Naive thymus-derived CD4-positive, alpha-beta T cell (primary cell): ENCODE measurements at regions of chr2 and their contacts with region 1.

Region 1: GRCh38 chr2:213238753-213239495 is 45.3 kb upstream of the SPAG16 start:
- DNase-seq: no peak
- ATAC-seq: no peak
- H3K4me3 ChIP-seq: no peak overlapping the region
- H3K4me3 Mint-ChIP-seq: peak overlapping the region in 5 of 10 donors; percentile 10 to 42 (median 21)
- H3K27ac ChIP-seq: no peak overlapping the region
- H3K27ac Mint-ChIP-seq: peak overlapping the region in 5 of 9 donors; percentile 13 to 64 (median 34)
- H3K4me1 ChIP-seq: no peaks in the 10 kb centered on the region
- H3K4me1 Mint-ChIP-seq: peaks cover 0 to 28% (median 7%) of the 10 kb centered on the region in 7 donors
- H3K27me3 ChIP-seq: no peaks in the 10 kb centered on the region
- H3K27me3 Mint-ChIP-seq: peaks cover 21 to 41% (median 31%) of the 10 kb centered on the region in 5 donors

Region 2: GRCh38 chr2:212863185-212863588 is 375.7 kb before region 1 on chr2:
- CTCF ChIA-PET with region 1: no interaction called
- POLR2A ChIA-PET with region 1: no interaction called
- intact Hi-C with region 1: loop called in 1 of 2 experiments (anchors 5 kb)
- DNase-seq: peak in 1 of 9 donors; percentile 14
- ATAC-seq: no peak
- H3K4me3 ChIP-seq: no peak overlapping the region
- H3K4me3 Mint-ChIP-seq: no peak overlapping the region
- H3K27ac ChIP-seq: no peak overlapping the region
- H3K27ac Mint-ChIP-seq: peak overlapping the region in 1 of 9 donors; percentile 5
- H3K4me1 ChIP-seq: no peaks in the 10 kb centered on the region
- H3K4me1 Mint-ChIP-seq: no peaks in the 10 kb centered on the region
- H3K27me3 ChIP-seq: no peaks in the 10 kb centered on the region
- H3K27me3 Mint-ChIP-seq: peaks cover 0 to 7% (median 0%) of the 10 kb centered on the region in 5 donors